Dendritic cell treated with granulocyte-macrophage colony-stimulating factor and Interleukin-4, amounts not matched to agents 40 ng/mL and 50 ng/mL, for 4 days (primary cell): ENCODE measurements at regions of chr17 and their contacts with region 1.

Region 1: DNA sequence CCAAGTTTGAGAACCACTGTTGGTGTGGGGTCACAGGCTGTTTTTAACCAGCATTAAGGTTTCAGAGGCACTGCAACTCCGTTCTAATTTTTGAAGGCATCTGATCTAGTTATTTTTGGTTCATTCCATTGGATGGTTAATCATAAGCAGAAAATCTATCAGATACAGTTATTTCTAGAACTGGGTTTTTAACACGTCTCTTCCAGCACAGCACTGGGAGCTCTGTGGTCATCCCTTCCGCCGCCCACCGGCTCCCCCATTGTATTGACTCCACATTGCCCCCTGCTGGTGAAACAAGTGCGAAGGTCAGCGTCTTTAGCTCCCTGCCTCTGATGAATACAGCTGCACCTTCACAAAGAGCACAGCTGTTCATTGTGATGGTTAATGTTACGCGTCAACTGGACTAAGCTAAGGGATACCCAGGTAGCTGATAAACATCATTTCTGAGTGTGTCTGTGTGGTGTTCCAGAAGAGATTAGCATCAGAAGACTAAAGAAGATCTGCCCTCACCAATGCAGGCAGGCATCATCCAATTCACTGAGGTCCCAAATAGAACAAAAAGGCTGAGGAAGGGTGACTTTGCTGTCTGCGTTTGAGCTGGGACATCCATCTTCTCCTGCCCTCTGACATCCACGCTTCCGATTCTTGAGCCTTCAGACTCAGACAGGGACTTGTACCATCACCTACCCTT is 8.5 kb downstream of the CCL18 start:
- H3K4me3 Mint-ChIP-seq: peak overlapping the region; percentile 17
- H3K27ac Mint-ChIP-seq: peak overlapping the region; percentile 74
- H3K4me1 Mint-ChIP-seq: peaks cover 42% of the 10 kb centered on the region
- H3K27me3 Mint-ChIP-seq: no peaks in the 10 kb centered on the region

Region 2: GRCh38 chr17:35986643-35987042 is 85.9 kb before region 1 on chr17 and contains the start of gene CCL14:
- intact Hi-C with region 1: no loop called
- H3K4me3 Mint-ChIP-seq: peak within 1 kb of the TSS; percentile 49
- H3K27ac Mint-ChIP-seq: peak within 1 kb of the TSS; percentile 63
- H3K4me1 Mint-ChIP-seq: peaks cover 38% of the 10 kb centered on the region
- H3K27me3 Mint-ChIP-seq: peaks cover 2% of the 10 kb centered on the region

Region 3: GRCh38 chr17:36034127-36034526 is 38.4 kb before region 1 on chr17:
- intact Hi-C with region 1: loop called (anchors 5 kb)
- H3K4me3 Mint-ChIP-seq: no peak overlapping the region
- H3K27ac Mint-ChIP-seq: peak overlapping the region; percentile 76
- H3K4me1 Mint-ChIP-seq: peaks cover 71% of the 10 kb centered on the region
- H3K27me3 Mint-ChIP-seq: peaks cover 3% of the 10 kb centered on the region